HEK293T (cell line): ENCODE measurements at regions of chr16 and their contacts with region 1.

Region 1: GRCh38 chr16:67781565-67781921 is 24.8 kb downstream of the RANBP10 start:
- DNase-seq: no peak

Region 2: DNA sequence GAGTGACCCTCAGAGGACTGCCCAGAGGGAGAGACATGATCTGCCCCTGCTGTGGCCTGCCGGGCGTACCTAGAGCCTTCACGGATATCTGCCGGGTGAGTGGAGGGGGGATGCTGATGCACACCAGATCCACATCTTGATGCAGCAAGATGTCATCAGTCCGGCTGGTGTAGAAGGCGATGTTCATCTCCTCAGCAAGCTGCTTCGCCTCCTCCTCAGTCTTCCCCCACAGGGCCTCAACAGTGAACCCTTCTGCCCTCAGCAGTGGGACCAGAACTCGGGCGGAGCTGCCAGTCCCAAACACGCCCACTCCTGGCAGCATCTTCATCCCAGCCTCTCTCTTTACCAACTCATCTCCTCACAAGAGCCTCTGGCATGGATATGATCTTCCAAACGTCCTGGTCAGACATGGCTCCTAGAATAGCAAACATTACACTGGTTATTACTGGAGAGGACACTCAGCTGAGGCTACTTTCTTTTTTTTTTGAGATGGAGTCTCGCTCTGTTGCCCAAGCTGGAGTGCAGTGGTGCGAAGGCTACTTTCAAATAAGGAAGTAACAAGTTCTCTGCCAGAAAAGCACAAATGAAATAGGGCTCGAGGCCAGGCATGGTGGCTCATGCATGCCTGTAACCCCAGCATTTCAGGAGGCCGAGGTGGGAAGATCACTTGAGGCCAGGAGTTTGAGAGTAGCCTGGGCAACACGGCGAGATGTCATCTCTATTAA is 96.0 kb before region 1 on chr16:
- CTCF ChIA-PET with region 1: no interaction called
- POLR2A ChIA-PET with region 1: no interaction called
- DNase-seq: no peak

Region 3: GRCh38 chr16:67719048-67719777 is 62.3 kb before region 1 on chr16 and contains the start of gene GFOD2:
- CTCF ChIA-PET with region 1: no interaction called
- POLR2A ChIA-PET with region 1: interaction called, 12 read pairs
- DNase-seq: peak; percentile 100

Region 4: DNA sequence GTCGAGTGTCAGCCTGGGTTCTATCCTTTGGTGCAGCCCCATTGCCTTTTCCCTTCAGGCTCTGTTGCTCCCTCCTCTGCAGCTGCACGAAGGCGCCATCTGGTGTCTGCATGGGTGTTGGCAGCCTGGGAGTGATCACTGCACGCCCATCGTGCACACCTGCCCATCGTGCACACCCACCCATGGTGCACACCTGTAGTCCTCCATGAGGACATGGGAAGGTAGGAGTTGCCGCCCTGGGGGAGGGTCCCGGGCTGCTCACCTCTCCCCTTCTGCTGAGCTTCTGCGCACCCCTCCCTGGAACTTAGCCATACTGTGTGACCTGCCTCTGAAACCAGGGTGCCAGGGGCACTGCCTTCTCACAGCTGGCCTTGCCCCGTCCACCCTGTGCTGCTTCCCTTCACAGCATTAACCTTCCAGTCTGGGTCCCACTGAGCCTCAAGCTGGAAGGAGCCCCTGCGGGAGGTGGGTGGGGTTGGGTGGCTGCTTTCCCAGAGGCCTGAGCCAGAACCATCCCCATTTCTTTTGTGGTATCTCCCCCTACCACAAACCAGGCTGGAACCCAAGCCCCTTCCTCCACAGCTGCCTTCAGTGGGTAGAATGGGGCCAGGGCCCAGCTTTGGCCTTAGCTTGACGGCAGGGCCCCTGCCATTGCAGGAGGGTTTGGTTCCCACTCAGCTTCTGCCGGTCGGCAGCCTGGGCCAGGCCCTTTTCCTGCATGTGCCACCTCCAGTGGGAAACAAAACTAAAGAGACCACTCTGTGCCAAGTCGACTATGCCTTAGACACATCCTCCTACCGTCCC is 147.2 kb after region 1 on chr16:
- CTCF ChIA-PET with region 1: no interaction called
- POLR2A ChIA-PET with region 1: no interaction called
- DNase-seq: peak; percentile 82